PC-3 (cell line): ENCODE measurements at regions of chr20 and their contacts with region 1.

Region 1: GRCh38 chr20:23420943-23421931 is at the start of gene NAPB:
- DNase-seq: peak; percentile 95
- ATAC-seq: peak; percentile 99
- H3K4me3 ChIP-seq: peak within 1 kb of the TSS; percentile 74
- H3K27ac ChIP-seq: peak within 1 kb of the TSS; percentile 14
- H3K4me1 ChIP-seq: peaks cover 12% of the 10 kb centered on the region
- H3K27me3 ChIP-seq: no peaks in the 10 kb centered on the region
- CTCF ChIP-seq: no peak; the same call in 1 of the 2 replicates
- total RNA-seq, gene NAPB: 5.0 and 7.8 TPM in 2 replicates

Region 2: DNA sequence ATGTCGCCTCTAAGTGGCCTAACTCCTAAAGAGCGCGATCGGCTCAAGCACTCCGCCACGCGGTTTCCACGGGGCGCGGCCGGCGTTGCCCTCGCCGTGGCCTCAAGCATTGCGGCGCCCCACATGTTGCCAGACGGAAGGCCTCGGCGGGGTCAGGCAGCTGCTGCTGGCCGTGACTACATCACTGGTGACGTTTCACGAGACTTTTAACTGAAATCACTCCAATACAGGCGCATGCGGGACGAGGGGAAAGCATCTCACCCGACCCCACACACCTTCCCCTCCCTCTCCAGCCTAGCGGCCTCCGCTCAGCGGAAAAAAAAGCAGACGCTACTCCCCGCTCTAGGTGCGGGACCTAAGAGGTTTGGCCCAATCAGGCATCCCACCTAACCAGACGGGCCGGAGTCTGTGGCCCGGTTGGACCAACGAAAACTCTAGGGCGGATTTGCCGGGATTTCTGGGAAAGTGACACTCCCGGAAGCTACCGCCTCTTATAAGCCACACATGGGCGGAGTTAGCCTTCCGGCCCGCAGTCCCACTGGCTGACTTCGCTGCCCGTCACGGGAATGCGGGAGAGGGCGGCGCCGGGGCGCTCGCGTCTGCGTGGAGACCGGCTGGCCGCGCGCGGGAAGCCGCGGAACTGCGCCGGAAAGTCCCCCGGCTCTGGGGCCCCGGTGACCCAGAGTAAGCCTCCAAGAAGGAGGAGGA is 70.9 kb before region 1 on chr20 and contains the start of gene NXT1:
- CTCF ChIA-PET with region 1: interaction called, 10 read pairs
- POLR2A ChIA-PET with region 1: interaction called, 4 read pairs
- intact Hi-C with region 1: loop called (anchors 1 kb)
- DNase-seq: peak; percentile 99
- ATAC-seq: peak; percentile 87
- H3K4me3 ChIP-seq: peak within 1 kb of the TSS; percentile 89
- H3K27ac ChIP-seq: peak within 1 kb of the TSS; percentile 87
- H3K4me1 ChIP-seq: peaks cover 18% of the 10 kb centered on the region
- H3K27me3 ChIP-seq: no peaks in the 10 kb centered on the region
- CTCF ChIP-seq: no peak
- total RNA-seq, gene NXT1: 82.0 and 98.0 TPM in 2 replicates

Region 3: DNA sequence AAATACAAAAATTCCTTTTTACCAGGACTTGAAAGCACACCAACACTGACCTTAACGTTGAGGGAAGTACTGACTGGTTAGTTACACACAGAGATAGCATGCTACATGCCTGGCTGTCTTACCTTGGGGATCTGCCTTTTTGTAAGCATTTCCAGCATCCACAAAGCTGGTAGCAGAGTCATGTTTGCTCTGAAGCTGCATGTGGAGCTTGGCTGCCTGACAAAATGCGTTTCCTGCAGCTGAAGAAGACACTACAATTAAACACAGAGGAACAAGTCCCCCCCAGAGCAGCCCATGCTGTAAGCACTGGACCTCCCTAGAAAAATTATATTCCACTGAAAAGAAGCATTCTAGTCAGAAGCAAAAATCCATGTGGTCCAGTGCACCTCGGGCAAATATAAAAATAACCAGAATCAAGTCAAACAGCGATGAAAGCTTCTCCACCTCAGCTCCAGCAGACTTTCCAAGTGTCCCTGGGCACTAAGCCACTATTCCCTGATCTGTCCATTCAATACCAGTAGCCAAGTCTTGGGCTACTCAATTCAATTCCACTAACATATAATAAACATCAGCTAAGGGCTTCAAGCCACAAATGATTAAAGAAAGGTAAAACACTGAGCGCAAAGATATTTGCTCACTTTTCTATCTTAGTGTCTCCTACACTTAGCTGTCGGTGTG is 24.1 kb before region 1 on chr20:
- CTCF ChIA-PET with region 1: no interaction called
- POLR2A ChIA-PET with region 1: no interaction called
- intact Hi-C with region 1: no loop called
- DNase-seq: no peak
- ATAC-seq: peak; percentile 48
- H3K4me3 ChIP-seq: no peak overlapping the region
- H3K27ac ChIP-seq: no peak overlapping the region
- H3K4me1 ChIP-seq: no peaks in the 10 kb centered on the region
- H3K27me3 ChIP-seq: no peaks in the 10 kb centered on the region
- CTCF ChIP-seq: no peak

Region 4: GRCh38 chr20:23449421-23449820 is 28.2 kb after region 1 on chr20:
- CTCF ChIA-PET with region 1: no interaction called
- POLR2A ChIA-PET with region 1: no interaction called
- intact Hi-C with region 1: no loop called
- DNase-seq: no peak
- ATAC-seq: no peak
- H3K4me3 ChIP-seq: no peak overlapping the region
- H3K27ac ChIP-seq: no peak overlapping the region
- H3K4me1 ChIP-seq: peaks cover 10% of the 10 kb centered on the region
- H3K27me3 ChIP-seq: peaks cover 32% of the 10 kb centered on the region
- CTCF ChIP-seq: no peak